Common myeloid progenitor, CD34-positive (primary cell): ENCODE measurements at regions of chr5 and their contacts with region 1.

Region 1: DNA sequence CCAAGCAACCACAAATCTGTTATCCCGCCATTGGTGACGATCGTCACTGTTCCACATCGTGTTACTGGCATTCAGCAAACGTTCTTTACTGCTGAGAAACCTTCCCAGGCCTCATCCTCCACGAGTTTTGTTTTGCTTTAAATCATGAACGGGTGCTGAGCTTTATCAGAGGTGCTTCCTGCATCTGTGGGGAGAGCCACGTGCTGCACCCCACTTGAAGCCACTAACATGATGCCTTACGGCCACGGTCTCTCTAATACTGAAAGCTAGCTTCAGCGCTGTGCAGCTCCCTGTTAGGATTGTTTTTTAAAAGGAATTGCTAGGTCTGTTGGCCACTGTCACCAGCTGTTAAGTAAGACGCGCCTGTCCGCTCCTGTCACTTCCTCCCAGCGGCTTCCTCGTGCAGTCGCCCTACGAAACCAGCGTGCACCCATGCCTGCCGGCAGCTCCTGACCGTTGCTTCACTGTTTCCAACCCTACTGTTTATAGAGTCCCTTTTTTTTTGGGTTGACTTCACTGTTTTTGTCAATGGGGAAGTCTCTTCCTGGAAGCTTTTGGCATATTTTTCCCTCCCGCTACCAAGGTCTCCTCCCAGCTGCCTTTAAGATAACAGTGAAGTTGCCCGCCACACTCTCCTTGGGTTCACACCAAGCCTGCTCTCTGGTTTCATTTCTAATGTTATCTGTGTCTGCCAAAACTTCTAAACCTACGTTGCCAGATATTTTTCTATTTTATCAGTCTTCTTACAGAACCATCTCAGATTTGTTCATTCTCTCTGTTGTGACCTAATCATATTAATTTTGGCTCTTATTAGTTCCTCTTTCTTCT is 20.3 kb downstream of the LPCAT1 start:
- DNase-seq: peak; percentile 47 to 75 (median 62)
- H3K4me3 ChIP-seq: peak overlapping the region in 4 of 7 experiments; percentile 8 to 54 (median 44)
- H3K27ac ChIP-seq: peak overlapping the region in 1 of 2 experiments; percentile 4
- H3K4me1 ChIP-seq: peaks cover 2 to 20% (median 16%) of the 10 kb centered on the region in 4 experiments
- H3K27me3 ChIP-seq: no peaks in the 10 kb centered on the region

Region 2: GRCh38 chr5:1363160-1363559 is 140.3 kb before region 1 on chr5:
- CTCF ChIA-PET with region 1: no interaction called
- POLR2A ChIA-PET with region 1: no interaction called
- DNase-seq: no peak
- H3K4me3 ChIP-seq: no peak overlapping the region
- H3K27ac ChIP-seq: no peak overlapping the region
- H3K4me1 ChIP-seq: no peaks in the 10 kb centered on the region
- H3K27me3 ChIP-seq: peaks cover 2 to 52% (median 9%) of the 10 kb centered on the region in 5 experiments

Region 3: DNA sequence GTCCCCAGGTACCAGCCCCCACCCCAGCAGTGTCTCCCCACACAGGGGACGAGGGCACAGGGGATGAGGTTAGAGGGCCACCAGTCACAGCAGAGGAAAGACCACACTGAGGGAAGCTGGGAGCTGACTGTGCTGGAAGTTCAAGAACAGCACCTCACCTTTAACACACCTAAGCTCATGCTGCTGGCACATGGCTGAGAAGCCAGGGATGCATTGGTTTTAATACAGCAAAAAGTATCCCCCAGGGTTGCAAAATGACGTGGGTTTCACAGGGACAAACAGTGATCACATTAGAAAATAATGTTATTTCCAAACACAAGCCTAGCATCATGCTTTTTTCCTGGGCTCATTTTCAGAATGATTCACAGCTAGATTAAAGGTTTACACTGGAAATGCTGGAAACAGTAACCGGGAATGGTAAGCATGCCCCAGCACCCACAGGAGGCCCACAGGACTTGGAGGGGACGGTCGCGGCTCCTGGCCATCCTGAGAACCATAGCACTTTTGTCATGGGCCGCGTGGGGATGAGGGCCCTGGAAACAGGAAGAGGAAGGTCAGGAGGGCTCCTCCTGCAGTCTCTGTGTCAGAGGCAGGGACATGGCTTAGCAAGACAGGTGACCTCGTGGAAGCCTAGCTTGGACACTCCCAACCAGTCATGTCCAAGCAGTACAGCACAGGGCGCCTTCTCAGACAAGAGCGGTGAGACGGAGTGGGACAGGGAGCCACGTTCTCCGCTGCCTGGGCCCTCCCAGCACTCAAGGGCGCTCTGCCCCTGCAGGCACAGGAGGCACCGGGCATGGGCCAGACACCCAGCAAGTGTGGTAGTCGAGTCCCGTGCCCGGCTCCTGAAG is 13.5 kb after region 1 on chr5:
- CTCF ChIA-PET with region 1: interaction called, 13 read pairs
- POLR2A ChIA-PET with region 1: no interaction called
- DNase-seq: no peak
- H3K4me3 ChIP-seq: no peak overlapping the region
- H3K27ac ChIP-seq: no peak overlapping the region
- H3K4me1 ChIP-seq: peaks cover 0 to 26% (median 9%) of the 10 kb centered on the region in 4 experiments
- H3K27me3 ChIP-seq: no peaks in the 10 kb centered on the region